Prostate gland (tissue), 2 donors: ENCODE measurements at regions of chr1 and their contacts with region 1.

Region 1: DNA sequence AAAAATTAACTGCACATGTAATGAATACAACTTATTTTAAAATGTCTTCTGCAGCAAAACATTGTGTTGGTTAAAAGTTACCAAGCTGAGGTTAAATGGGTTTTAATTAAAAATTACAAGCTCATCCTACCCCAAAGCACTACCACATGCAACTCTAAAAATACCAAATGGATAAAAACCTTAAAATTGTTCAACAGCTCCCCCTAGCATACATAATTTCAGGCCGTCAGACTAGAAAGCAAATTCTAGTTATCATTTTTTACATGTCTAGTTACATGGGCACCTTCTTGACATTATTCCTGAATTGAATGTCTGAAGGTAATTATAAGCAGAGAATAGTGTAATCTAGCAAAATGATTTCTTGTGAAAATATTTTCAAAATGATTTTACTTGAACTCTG is 176.5 kb downstream of the C1orf21 start:
- DNase-seq: no peak
- H3K4me3 ChIP-seq: no peak overlapping the region
- H3K27ac ChIP-seq: peak overlapping the region; percentile 55 to 69
- H3K4me1 ChIP-seq: peaks cover 10% of the 10 kb centered on the region
- H3K27me3 ChIP-seq: no peaks in the 10 kb centered on the region
- CTCF ChIP-seq: peak in 3 of 4 experiments; percentile 27 to 67 (median 62)
- POLR2A ChIP-seq: no peak

Region 2: DNA sequence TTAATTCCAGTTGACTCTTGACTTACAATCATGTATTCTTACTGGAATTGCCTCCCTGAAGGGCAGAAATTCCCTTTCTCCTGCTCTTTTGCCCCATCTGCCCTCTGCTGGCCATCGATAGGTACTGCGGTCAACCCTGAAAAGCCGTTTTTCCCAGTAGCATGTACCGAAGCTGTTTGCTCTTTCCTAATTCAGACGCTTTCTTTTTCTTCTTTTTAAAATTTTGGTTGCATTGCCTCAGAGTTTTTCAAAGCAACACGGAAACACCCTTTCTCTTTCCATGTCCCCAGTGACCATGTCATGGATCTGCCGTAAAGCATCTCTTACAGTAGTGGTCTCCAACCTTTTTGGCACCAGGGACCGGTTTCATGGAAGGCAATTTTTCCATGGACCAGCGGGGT is 340.7 kb before region 1 on chr1:
- intact Hi-C with region 1: loop called (anchors 10 kb)
- DNase-seq: peak; percentile 20
- H3K4me3 ChIP-seq: no peak overlapping the region
- H3K27ac ChIP-seq: no peak overlapping the region
- H3K4me1 ChIP-seq: no peaks in the 10 kb centered on the region
- H3K27me3 ChIP-seq: no peaks in the 10 kb centered on the region
- CTCF ChIP-seq: peak; percentile 85 to 93 (median 90)
- POLR2A ChIP-seq: no peak

Region 3: GRCh38 chr1:184386312-184387068 is 176.8 kb before region 1 on chr1 and contains the start of gene C1orf21:
- intact Hi-C with region 1: loop called (anchors 2 kb)
- DNase-seq: peak; percentile 93
- H3K4me3 ChIP-seq: peak within 1 kb of the TSS; percentile 98
- H3K27ac ChIP-seq: peak within 1 kb of the TSS; percentile 93 to 94
- H3K4me1 ChIP-seq: no peaks in the 10 kb centered on the region
- H3K27me3 ChIP-seq: no peaks in the 10 kb centered on the region
- CTCF ChIP-seq: peak in 1 of 4 experiments; percentile 5
- POLR2A ChIP-seq: peak; percentile 95
- total RNA-seq, gene C1orf21: 28.8 to 79.3 TPM

Region 4: GRCh38 chr1:184664042-184664655 is 100.8 kb after region 1 on chr1:
- intact Hi-C with region 1: loop called (anchors 5 kb)
- DNase-seq: peak; percentile 73
- H3K4me3 ChIP-seq: peak overlapping the region in 1 of 2 donors; percentile 14
- H3K27ac ChIP-seq: peak overlapping the region; percentile 34 to 47
- H3K4me1 ChIP-seq: peaks cover 15% of the 10 kb centered on the region
- H3K27me3 ChIP-seq: no peaks in the 10 kb centered on the region
- CTCF ChIP-seq: peak; percentile 82 to 90 (median 86)
- POLR2A ChIP-seq: no peak